ENCODE measurements at regions of chr3 and their contacts with region 1.

Region 1: DNA sequence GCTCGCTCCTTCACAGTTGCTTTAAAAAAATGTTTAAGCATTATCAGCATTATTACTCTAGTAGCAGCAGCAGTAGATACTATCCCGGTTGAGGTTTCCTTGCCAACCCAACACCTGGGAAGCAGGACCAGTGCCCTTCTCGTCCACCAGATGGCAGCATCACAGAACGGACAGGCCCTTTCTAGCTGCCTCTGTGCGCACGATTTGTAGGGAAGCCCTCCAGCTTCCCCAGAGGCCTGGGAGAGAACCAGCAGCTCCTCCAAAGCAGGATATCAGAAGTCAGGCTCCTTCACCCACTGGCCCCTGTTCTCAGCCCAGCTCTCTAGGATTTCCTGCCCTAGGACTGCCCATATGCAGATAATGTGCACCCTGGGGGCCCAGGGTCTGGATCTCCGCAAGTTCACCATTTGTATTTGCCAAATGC is 16.8 kb upstream of the ESYT3 start:
- DNase-seq: peak; percentile 67
- H3K4me3 ChIP-seq: no peak overlapping the region
- H3K27ac ChIP-seq: no peak overlapping the region
- H3K27me3 ChIP-seq: peaks cover 7% of the 10 kb centered on the region
- CTCF ChIP-seq: peak; percentile 98

Region 2: DNA sequence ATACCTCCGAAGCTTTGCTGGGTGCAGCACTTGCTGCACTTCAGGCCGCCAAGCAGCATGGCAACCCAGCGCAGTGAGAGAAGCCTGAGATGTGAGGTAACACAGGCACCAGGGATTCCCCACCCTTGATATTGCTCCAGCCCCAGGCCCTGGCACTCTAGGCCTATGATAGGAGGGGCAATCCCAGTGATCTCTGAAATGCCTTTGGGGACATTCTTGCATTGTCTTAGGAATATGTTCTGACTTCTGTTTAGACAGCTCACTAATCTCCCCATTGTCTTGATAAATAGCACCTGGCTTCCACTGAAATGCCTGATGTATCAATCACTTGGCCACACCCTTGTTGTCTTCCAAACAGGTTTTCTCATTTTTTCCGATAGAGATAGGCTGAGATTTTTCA is 550.6 kb before region 1 on chr3:
- CTCF ChIA-PET with region 1: no interaction called
- POLR2A ChIA-PET with region 1: no interaction called
- DNase-seq: no peak
- H3K4me3 ChIP-seq: no peak overlapping the region
- H3K27ac ChIP-seq: no peak overlapping the region
- H3K27me3 ChIP-seq: no peaks in the 10 kb centered on the region
- CTCF ChIP-seq: no peak

Region 3: GRCh38 chr3:138068579-138069174 is 348.9 kb before region 1 on chr3:
- CTCF ChIA-PET with region 1: no interaction called
- POLR2A ChIA-PET with region 1: no interaction called
- DNase-seq: peak; percentile 68
- H3K4me3 ChIP-seq: no peak overlapping the region
- H3K27ac ChIP-seq: no peak overlapping the region
- H3K27me3 ChIP-seq: no peaks in the 10 kb centered on the region
- CTCF ChIP-seq: peak; percentile 99

Region 4: DNA sequence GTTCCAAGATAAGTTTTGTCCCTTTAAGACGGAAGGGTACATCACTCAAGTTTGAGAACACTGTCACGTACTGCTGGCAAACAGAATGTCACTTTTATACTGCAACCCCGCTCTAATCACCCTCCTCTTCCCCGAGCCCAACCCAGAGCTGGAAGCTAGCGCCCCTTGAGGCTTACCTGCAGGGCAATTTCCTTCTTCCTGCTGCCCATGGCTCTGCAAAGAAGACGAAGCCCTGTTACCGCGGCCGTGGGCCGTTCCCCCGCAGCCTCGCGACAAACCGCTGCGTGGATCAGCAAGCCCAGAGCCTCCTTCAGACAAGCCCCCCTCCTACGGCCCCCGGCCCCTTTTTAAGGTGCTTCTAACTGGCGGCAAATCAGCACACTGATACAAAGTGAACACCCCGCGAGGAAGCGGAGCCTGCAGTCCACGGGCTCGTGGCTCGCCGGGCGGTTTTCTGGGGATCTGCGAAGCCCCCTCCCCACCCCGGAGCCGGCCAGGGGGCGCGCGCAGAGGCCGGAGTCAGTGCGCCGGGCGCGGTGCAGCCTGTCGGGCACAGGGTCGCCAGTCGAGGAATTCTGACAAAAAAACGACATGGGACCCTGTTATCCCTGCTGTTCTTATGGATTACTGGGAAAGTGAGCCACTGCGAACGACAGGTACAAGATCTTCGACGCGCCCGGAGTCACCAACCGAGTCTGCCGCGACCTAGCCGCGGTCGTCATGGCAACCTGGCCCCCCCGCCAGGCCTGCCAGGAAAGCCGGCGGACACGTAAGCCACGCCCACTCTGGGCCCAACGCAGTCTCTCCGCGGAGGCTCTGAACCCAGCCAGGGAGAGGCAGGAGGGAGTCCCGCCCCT is 88.2 kb before region 1 on chr3 and contains the start of gene NME9:
- CTCF ChIA-PET with region 1: interaction called, 13 read pairs
- POLR2A ChIA-PET with region 1: no interaction called
- DNase-seq: peak; percentile 55
- H3K4me3 ChIP-seq: peak within 1 kb of the TSS; percentile 68
- H3K27ac ChIP-seq: no peak within 1 kb of the TSS
- H3K27me3 ChIP-seq: peaks cover 5% of the 10 kb centered on the region
- CTCF ChIP-seq: peak; percentile 79
- polyA plus RNA-seq, gene NME9: 0.19 TPM in 1 of 2 replicates, not detected in the other

Region 5: GRCh38 chr3:138371070-138371965 is 46.3 kb before region 1 on chr3:
- CTCF ChIA-PET with region 1: interaction called, 10 read pairs
- POLR2A ChIA-PET with region 1: no interaction called
- DNase-seq: no peak
- H3K4me3 ChIP-seq: no peak overlapping the region
- H3K27ac ChIP-seq: no peak overlapping the region
- H3K27me3 ChIP-seq: no peaks in the 10 kb centered on the region
- CTCF ChIP-seq: no peak

Region 6: GRCh38 chr3:138434276-138434874 is 16.8 kb after region 1 on chr3 and contains the start of gene ESYT3:
- CTCF ChIA-PET with region 1: interaction called, 83 read pairs
- POLR2A ChIA-PET with region 1: interaction called, 4 read pairs
- DNase-seq: no peak
- H3K4me3 ChIP-seq: peak within 1 kb of the TSS; percentile 54
- H3K27ac ChIP-seq: no peak within 1 kb of the TSS
- H3K27me3 ChIP-seq: peaks cover 67% of the 10 kb centered on the region
- CTCF ChIP-seq: no peak
- polyA plus RNA-seq, gene ESYT3: 0.01 TPM in 1 of 2 replicates, not detected in the other

Region 7: DNA sequence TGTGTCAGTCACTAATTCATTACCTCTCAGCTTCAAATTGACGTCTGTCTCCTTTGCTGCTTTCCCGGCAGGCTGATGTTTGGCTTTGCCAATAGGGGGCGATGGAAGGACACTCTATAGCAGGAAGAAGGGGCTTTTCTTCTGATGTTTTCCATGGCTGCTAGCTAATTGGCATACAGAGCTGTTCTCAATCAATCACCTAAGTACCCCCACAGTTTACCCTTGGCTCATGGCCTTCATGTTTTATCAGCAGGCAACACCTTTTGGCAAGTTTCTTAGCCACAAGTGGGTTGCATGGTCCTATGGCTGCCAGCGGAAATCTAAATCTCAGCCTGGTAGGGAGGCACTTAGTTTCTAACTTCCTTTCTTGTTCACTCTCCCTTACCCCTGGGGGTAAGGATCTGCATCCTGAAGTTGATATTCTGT is 61.9 kb after region 1 on chr3:
- CTCF ChIA-PET with region 1: interaction called, 26 read pairs
- POLR2A ChIA-PET with region 1: no interaction called
- DNase-seq: no peak
- H3K4me3 ChIP-seq: no peak overlapping the region
- H3K27ac ChIP-seq: no peak overlapping the region
- H3K27me3 ChIP-seq: no peaks in the 10 kb centered on the region
- CTCF ChIP-seq: peak; percentile 95

Region 8: DNA sequence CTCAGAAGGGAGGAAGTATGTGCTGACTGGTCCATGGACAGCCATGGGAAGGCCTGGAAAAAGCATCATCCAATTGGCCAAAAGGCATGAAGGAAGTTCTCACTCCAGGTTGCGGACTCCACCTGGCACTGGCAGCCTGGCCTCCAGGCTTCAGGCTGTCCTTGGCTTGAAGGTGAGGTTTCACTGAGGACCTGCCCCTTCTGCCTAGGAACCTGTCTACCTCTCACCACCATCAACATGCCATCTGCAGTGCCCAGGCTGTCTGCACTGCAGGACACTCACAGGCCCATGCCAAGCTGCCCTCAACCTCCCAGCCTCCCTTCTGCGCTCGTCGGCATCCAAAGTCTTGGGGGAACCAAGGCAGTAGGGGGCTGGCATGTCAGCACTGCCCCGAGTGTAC is 125.4 kb after region 1 on chr3:
- CTCF ChIA-PET with region 1: no interaction called
- POLR2A ChIA-PET with region 1: no interaction called
- DNase-seq: no peak
- H3K4me3 ChIP-seq: no peak overlapping the region
- H3K27ac ChIP-seq: no peak overlapping the region
- H3K27me3 ChIP-seq: no peaks in the 10 kb centered on the region
- CTCF ChIP-seq: no peak

Region 9: GRCh38 chr3:138809500-138810256 is 392.1 kb after region 1 on chr3:
- CTCF ChIA-PET with region 1: no interaction called
- POLR2A ChIA-PET with region 1: no interaction called
- DNase-seq: no peak
- H3K4me3 ChIP-seq: no peak overlapping the region
- H3K27ac ChIP-seq: no peak overlapping the region
- H3K27me3 ChIP-seq: no peaks in the 10 kb centered on the region
- CTCF ChIP-seq: no peak

Region 10: GRCh38 chr3:138935848-138936740 is 518.5 kb after region 1 on chr3:
- CTCF ChIA-PET with region 1: interaction called, 12 read pairs
- POLR2A ChIA-PET with region 1: no interaction called
- DNase-seq: no peak
- H3K4me3 ChIP-seq: peak overlapping the region; percentile 55
- H3K27ac ChIP-seq: no peak overlapping the region
- H3K27me3 ChIP-seq: peaks cover 76% of the 10 kb centered on the region
- CTCF ChIP-seq: peak; percentile 77